Cardiac septum (tissue), 1 donor: ENCODE measurements at regions of chr6 and their contacts with region 1.

Region 1: GRCh38 chr6:138588805-138589434 is 89.6 kb upstream of the NHSL1 start:
- DNase-seq: no peak

Region 2: DNA sequence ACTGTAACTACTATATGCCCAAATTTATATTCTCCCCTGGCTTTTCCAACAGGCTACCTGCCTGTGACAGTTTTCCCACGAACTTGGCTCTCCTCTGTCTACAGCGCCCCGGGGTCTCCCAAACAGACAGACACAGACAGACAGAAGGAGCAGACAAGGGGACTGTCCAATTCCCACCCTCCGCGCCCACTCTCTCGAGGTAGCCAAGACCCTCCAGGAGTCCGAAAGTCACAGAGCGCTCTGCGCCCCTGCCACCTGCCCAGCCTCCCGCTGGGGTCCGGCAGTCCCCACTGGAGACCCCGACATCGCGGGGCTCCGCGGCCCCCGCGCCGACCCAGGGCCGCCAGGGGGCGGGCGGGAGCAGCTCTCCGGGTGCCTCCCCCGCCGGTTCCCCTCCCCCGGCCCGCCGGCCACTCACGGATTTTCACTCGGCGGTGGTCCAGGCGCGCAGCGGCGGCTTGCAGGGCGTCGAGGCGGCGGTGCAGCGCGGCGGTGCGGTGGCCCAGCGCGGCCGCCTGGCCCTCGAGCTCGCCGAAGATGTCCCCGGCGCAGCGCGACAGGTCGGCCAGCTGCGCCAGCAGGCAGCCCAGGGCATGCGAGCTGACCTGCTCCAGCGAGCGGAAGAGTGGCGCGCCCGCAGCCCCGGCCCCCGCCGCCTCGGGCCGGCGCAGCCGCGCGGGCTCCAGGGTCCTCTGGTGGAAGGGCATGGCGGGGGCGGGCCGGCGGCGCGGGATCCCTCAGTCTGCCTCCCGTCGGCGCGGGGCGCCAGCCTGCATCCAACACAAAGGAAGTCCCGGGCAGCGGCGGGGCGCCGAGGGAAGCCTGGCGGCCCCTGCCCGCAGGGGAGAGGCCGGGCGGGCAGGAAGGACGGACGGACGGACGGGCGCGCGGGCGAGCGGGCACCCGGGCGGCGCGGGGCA is 103.4 kb after region 1 on chr6:
- intact Hi-C with region 1: loop called (anchors 2 kb)
- DNase-seq: peak; percentile 87

Region 3: GRCh38 chr6:138765896-138766655 is 177.2 kb after region 1 on chr6:
- intact Hi-C with region 1: loop called (anchors 2 kb)
- DNase-seq: no peak